ENCODE measurements at regions of chr5 and their contacts with region 1.

Region 1: GRCh38 chr5:59380350-59380951 is 513.1 kb downstream of the PDE4D start:
- DNase-seq: peak; percentile 63
- H3K4me3 ChIP-seq: no peak overlapping the region
- H3K27ac ChIP-seq: no peak overlapping the region
- H3K4me1 ChIP-seq: no peaks in the 10 kb centered on the region
- H3K27me3 ChIP-seq: no peaks in the 10 kb centered on the region
- CTCF ChIP-seq: peak; percentile 61

Region 2: GRCh38 chr5:59222687-59223521 is 157.5 kb before region 1 on chr5:
- CTCF ChIA-PET with region 1: no interaction called
- POLR2A ChIA-PET with region 1: no interaction called
- intact Hi-C with region 1: loop called (anchors 5 kb)
- DNase-seq: no peak
- H3K4me3 ChIP-seq: no peak overlapping the region
- H3K27ac ChIP-seq: no peak overlapping the region
- H3K4me1 ChIP-seq: no peaks in the 10 kb centered on the region
- H3K27me3 ChIP-seq: no peaks in the 10 kb centered on the region
- CTCF ChIP-seq: no peak

Measured in A673 (cell line).